Activated naive CD8-positive, alpha-beta T cell treated with anti-CD3 and anti-CD28 coated beads, Interleukin-2, amount 10 ng/mL, durations not matched to agents 7 days and 5 days (primary cell): ENCODE measurements at regions of chr18 and their contacts with region 1.

Region 1: DNA sequence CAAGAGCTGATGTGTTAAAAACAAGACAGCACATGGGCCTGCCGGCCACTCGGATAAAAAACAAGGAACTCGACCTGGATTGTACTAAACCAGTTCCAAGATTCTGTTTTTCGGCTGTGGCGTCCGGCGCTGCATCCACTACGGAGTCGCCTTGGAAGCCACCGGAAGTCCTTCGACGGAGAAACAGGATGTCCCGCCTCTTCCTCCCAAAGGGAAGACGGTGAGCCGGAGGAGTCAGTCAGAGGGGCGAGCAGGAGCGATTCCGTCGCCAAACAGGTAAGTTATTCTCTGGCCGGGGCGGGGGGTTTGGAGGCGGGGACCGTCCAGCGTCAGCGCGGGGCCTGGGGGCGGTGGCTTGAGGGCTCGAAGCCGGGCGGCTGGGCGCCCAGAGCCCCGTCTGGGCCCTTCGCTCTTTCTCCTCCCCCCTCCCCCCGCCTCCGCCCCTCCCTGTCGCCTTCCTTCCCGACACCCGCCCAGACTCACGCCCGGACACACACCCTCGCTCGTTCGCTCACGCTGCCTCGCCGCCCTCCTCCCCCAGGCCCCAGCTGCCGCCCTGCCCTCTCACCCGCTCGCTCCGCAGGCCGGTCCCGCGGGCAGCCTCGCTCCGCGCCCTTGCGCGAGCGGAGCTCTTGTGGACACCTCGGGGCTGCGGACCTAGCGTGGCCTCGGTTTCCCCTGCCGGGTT is at the start of gene ZNF407:
- DNase-seq: peak; percentile 87
- ATAC-seq: peak; percentile 79
- H3K4me3 Mint-ChIP-seq: peak within 1 kb of the TSS; percentile 92
- H3K27ac Mint-ChIP-seq: peak within 1 kb of the TSS; percentile 92
- H3K4me1 Mint-ChIP-seq: peaks cover 36% of the 10 kb centered on the region
- H3K27me3 Mint-ChIP-seq: no peaks in the 10 kb centered on the region
- total RNA-seq, gene ZNF407: 16.9 to 17.1 TPM

Region 2: DNA sequence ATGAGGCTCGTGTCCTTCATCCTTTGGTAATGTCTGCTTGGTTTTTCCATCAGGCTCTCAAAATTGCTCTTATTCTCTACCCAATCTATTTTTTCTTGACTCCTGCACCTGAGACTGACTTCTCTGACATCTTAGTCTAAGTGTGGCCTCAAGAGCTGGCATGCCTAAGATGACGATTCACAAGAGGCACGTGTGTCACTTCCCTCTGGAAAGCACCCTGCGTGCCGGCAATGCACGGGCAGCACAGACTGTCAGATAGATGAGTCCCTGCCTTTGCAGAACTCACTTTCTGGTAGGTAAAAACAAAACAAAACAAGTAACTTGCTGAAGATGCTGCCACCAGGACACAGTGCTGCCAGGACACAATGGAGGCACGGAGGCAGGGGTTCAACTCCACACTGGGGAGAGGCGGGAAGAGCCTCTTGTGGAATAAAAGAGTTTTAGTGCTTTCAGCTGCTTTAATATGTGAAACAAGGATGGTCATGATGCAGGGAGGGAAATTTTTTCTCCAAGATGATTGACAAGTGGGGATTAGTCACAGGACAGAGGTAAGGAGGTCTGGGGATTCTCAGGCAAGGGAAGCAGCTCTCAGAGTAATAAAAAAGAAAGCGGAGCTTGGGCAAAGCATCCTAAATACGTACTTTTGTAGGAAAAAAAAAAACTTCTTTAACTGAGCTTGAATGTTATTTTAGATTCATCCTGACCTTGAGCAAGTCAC is 333.3 kb before region 1 on chr18:
- POLR2A ChIA-PET with region 1: no interaction called
- DNase-seq: no peak
- ATAC-seq: no peak
- H3K4me3 Mint-ChIP-seq: no peak overlapping the region
- H3K27ac Mint-ChIP-seq: no peak overlapping the region
- H3K4me1 Mint-ChIP-seq: no peaks in the 10 kb centered on the region
- H3K27me3 Mint-ChIP-seq: no peaks in the 10 kb centered on the region

Region 3: GRCh38 chr18:74579496-74580065 is 18.2 kb before region 1 on chr18:
- POLR2A ChIA-PET with region 1: no interaction called
- DNase-seq: no peak
- ATAC-seq: no peak
- H3K4me3 Mint-ChIP-seq: no peak overlapping the region
- H3K27ac Mint-ChIP-seq: no peak overlapping the region
- H3K4me1 Mint-ChIP-seq: no peaks in the 10 kb centered on the region
- H3K27me3 Mint-ChIP-seq: peaks cover 26% of the 10 kb centered on the region

Region 4: GRCh38 chr18:74631623-74632283 is 33.9 kb after region 1 on chr18:
- POLR2A ChIA-PET with region 1: interaction called, 10 read pairs
- DNase-seq: no peak
- ATAC-seq: peak; percentile 87
- H3K4me3 Mint-ChIP-seq: peak overlapping the region; percentile 81
- H3K27ac Mint-ChIP-seq: peak overlapping the region; percentile 95
- H3K4me1 Mint-ChIP-seq: peaks cover 23% of the 10 kb centered on the region
- H3K27me3 Mint-ChIP-seq: no peaks in the 10 kb centered on the region